ENCODE measurements at regions of chr20 and their contacts with region 1.

Region 1: DNA sequence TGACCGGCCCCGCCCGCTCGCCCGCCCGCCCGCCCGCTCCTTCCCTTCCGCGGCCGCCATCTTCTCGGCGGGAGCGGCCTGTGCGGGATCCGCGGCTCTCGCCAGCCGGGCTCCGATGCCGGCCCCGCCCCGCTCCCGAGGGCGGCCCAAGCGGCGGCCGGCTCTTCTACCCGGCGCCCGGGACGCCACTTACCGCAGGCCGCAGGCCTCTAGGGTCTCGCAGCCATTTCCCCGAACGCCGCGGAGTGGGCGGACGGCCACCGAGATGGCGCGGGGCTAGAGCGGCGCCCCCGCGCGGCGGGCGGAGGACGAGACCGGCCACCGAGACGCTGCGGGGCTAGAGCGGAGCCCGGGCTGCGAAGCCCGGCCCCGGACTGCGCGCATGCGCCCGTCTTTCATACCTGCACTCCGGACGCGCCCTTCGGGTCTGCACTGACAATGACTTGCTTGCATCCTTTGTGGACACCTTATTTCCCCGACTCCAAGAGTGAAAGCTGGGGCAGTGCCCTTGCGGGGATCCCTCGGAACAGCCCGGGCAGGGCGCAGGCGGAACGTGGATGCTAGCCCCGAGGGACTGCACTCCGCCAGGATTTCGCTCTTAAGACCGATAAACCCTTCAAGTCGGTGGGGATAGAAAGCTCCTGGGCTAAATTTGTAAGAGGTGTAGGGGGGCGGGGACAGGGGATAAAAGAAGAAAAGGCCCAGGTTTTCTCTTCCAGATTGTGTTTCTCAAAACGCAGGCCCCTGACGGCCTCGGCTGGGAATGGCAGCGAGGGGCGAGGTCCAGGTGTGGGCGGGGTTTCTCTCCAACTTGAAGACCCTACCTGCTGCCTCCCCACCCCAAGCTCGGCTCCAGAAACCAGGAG is at the start of gene DIDO1:
- DNase-seq: peak; percentile 90
- ATAC-seq: peak; percentile 87
- H3K4me3 Mint-ChIP-seq: peak within 1 kb of the TSS; percentile 97
- H3K27ac Mint-ChIP-seq: peak within 1 kb of the TSS; percentile 93
- H3K4me1 Mint-ChIP-seq: peaks cover 81% of the 10 kb centered on the region
- H3K27me3 Mint-ChIP-seq: no peaks in the 10 kb centered on the region
- CTCF ChIP-seq: no peak
- total RNA-seq, gene DIDO1: 79.2 and 89.1 TPM in 2 replicates

Region 2: GRCh38 chr20:62623488-62624324 is 302.8 kb before region 1 on chr20:
- CTCF ChIA-PET with region 1: no interaction called
- POLR2A ChIA-PET with region 1: no interaction called
- intact Hi-C with region 1: loop called (anchors 10 kb)
- DNase-seq: peak; percentile 82
- ATAC-seq: peak; percentile 87
- H3K4me3 Mint-ChIP-seq: peak overlapping the region; percentile 80
- H3K27ac Mint-ChIP-seq: peak overlapping the region; percentile 98
- H3K4me1 Mint-ChIP-seq: peaks cover 43% of the 10 kb centered on the region
- H3K27me3 Mint-ChIP-seq: no peaks in the 10 kb centered on the region
- CTCF ChIP-seq: no peak

Region 3: GRCh38 chr20:62861726-62862336 is 64.6 kb before region 1 on chr20 and contains the start of gene TCFL5:
- CTCF ChIA-PET with region 1: no interaction called
- POLR2A ChIA-PET with region 1: interaction called, 3 read pairs
- intact Hi-C with region 1: loop called (anchors 5 kb)
- DNase-seq: peak; percentile 99
- ATAC-seq: peak; percentile 90
- H3K4me3 Mint-ChIP-seq: peak within 1 kb of the TSS; percentile 81
- H3K27ac Mint-ChIP-seq: peak within 1 kb of the TSS; percentile 52
- H3K4me1 Mint-ChIP-seq: peaks cover 41% of the 10 kb centered on the region
- H3K27me3 Mint-ChIP-seq: no peaks in the 10 kb centered on the region
- CTCF ChIP-seq: no peak
- total RNA-seq, gene TCFL5: 54.5 and 55.6 TPM in 2 replicates

Region 4: DNA sequence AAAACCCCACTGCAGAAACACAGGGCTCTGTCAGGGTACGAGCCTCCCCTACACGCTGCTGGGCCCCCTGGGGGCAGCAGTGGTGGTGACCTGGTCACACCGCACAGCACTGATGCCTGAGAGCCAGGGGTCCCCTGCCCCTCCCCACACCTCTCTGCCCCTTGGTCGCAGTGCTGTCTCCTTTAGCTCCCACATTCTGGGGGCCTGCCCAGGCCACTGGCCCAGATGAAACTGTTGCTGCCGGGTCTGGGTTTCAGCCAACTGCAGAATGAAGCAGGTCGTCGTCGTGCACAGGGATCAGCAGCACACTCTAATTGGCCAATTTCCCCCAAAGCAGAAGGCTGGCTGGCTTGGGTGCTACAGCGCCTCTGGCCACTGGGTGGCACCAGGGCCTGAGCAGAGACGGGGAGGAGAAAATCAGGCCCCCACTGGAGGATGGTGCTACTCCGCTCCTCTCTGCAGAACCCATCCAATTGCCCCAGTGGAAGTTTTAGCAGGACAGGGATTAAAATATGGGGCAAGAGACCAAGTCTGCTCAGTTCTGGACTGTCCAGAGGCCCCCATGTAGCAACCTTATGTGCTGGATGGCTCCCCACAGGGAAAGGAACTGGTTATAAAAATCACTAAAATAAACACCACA is 26.3 kb before region 1 on chr20:
- CTCF ChIA-PET with region 1: no interaction called
- POLR2A ChIA-PET with region 1: interaction called, 5 read pairs
- intact Hi-C with region 1: loop called (anchors 1 kb)
- DNase-seq: peak; percentile 55
- ATAC-seq: peak; percentile 98
- H3K4me3 Mint-ChIP-seq: peak overlapping the region; percentile 46
- H3K27ac Mint-ChIP-seq: peak overlapping the region; percentile 35
- H3K4me1 Mint-ChIP-seq: peaks cover 25% of the 10 kb centered on the region
- H3K27me3 Mint-ChIP-seq: no peaks in the 10 kb centered on the region
- CTCF ChIP-seq: peak; percentile 81

Region 5: DNA sequence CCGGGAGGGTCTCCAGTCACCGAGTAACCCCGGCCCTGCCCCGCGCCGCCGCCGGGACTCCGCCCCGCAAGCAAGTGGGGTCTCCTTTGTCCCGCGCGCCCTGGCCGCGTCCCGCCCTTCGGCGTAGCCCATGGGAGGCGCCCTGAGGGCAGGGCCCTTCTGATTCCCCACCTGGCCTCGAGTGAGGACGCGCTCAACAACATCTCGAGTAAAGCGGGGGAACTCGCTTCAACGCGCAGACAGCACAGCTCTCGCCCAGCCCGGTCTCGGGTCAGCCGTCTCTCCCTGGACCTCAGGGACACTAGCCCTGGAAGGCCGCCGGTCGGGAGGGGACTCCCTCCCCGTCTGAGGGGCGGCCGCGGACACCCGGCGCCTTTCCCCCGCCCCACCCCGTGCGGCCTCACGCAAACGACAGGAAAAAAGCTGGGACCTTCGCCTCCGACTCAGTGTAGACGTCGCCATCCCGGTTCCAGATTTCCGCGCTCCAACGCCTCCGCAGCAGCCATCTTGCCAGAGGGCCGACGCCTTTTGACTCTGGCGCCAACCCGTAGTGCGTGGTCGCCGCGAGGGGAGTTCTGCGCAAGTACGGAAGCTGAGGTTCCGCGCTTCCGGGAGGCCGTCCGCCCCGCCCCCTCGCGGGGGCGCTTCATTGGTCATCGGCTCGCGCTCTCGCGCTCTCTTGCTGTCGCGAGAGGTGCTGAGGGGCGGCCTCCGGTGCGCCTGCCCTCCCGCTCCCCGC is 11.1 kb after region 1 on chr20:
- CTCF ChIA-PET with region 1: interaction called, 3 read pairs
- POLR2A ChIA-PET with region 1: interaction called, 68 read pairs
- intact Hi-C with region 1: loop called (anchors 1 kb)
- DNase-seq: peak; percentile 97
- ATAC-seq: peak; percentile 88
- H3K4me3 Mint-ChIP-seq: peak overlapping the region; percentile 94
- H3K27ac Mint-ChIP-seq: peak overlapping the region; percentile 94
- H3K4me1 Mint-ChIP-seq: peaks cover 42% of the 10 kb centered on the region
- H3K27me3 Mint-ChIP-seq: no peaks in the 10 kb centered on the region
- CTCF ChIP-seq: no peak

Region 6: DNA sequence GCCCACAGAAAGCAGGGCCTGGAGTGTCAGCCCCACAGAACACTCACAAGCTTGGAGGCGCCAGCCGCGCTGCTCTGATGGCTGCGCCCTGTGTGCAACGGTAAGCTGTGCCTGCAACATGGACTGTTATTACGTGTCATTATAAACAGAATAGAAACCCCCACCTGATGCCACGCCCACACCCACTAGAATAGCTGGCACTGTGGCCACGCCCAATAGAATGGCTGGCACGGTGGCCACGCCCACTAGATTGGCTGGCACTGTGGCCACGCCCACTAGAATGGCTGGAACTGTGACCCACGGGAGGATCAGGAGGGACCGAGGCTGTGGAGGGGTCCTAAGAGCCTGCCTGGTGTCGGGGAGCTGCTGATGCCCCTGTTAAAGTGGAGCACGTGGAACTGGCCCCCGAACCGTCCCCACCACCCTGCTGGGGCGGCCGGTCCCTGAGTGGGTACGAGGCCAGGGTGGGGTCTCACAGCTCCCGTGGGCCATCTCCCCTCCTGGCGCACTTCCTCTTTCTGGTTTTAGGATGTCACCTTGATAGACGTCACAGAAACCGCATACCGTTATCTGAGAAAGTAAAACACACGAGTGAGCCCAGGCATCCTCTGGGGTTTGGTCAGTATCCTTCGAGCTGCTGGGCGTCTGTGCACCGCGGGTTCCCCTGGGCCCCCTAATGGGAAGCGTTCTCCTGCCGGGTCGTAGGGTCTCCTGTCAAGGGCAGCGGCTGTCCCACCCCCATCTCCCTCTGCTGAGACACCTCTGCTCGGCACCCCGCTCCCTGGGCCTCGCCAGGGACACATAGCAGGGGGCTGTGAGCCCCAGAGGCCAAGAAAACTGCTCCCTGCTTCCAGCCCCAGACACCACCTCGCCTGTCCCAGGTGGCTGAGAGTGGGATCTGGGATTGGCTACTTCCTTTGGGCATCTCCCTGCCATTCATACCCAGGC is 51.4 kb after region 1 on chr20:
- CTCF ChIA-PET with region 1: no interaction called
- POLR2A ChIA-PET with region 1: interaction called, 3 read pairs
- intact Hi-C with region 1: loop called (anchors 2 kb)
- DNase-seq: peak; percentile 84
- ATAC-seq: peak; percentile 81
- H3K4me3 Mint-ChIP-seq: peak overlapping the region; percentile 67
- H3K27ac Mint-ChIP-seq: peak overlapping the region; percentile 70
- H3K4me1 Mint-ChIP-seq: peaks cover 51% of the 10 kb centered on the region
- H3K27me3 Mint-ChIP-seq: peaks cover 23% of the 10 kb centered on the region
- CTCF ChIP-seq: no peak

Measured in activated B cell treated with CpG ODN at 0.5 μM for 24 hours (primary cell).